Gastrocnemius medialis (tissue), 4 donors: ENCODE measurements at regions of chr2 and their contacts with region 1.

Region 1: DNA sequence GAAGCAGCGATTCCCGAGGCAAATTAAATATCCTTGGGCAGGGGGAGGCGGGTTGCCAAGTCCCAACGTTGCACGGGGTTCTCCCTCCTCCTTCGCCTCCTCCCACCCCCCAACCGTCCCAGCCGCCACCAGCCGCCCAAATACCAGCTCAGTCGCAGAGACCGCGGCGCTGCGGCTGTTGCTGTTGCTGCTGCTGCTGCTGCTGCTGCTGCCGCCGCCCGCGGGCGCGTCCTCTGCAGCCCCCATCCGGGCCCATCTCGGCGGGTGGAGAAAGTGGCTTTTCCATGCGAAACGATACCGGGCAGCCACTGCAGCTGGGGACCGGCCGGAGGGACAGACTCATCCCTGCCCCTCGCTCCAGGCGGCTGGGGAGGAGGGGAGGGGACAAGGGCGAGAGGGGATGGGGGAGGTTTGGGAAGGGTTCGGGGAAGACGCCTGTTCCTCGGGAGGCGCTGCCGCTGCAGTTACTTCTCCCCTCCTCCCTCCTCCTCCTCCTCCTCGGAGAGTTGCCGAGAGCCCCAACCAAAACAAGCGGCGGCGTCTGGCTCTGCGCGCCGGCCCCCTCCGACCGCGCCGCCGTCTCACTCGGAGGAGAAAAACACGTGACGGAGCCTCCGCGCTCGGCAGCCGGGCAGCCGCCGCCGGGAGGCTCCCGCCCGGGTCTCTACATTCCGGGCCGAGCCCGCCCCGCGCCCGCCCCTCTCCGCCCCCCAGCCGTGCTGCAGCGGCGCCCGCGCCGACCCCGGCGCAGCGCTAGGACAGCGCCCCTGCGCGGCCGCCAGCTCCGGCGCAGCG is at the start of gene IRS1:
- DNase-seq: peak; percentile 45 to 49
- ATAC-seq: peak; percentile 11 to 24
- H3K4me3 ChIP-seq: peak within 1 kb of the TSS; percentile 79 to 95 (median 88)
- H3K27ac ChIP-seq: peak within 1 kb of the TSS; percentile 95 to 99 (median 98)
- H3K4me1 ChIP-seq: peaks cover 38 to 44% of the 10 kb centered on the region in 2 donors
- H3K27me3 ChIP-seq: no peaks in the 10 kb centered on the region
- CTCF ChIP-seq: peak in 2 of 5 experiments; percentile 42 to 73
- POLR2A ChIP-seq: peak; percentile 21 to 40
- total RNA-seq, gene IRS1: 2.2 to 71.1 (median 6.3) TPM

Region 2: GRCh38 chr2:225668606-225669266 is 1130.6 kb before region 1 on chr2:
- in situ Hi-C with region 1: loop called in 3 of 4 experiments (anchors 5 to 10 kb)
- intact Hi-C with region 1: no loop called
- DNase-seq: no peak
- ATAC-seq: peak in 1 of 2 donors; percentile 47
- H3K4me3 ChIP-seq: no peak overlapping the region
- H3K27ac ChIP-seq: no peak overlapping the region
- H3K4me1 ChIP-seq: peaks cover 0 to 3% of the 10 kb centered on the region in 2 donors
- H3K27me3 ChIP-seq: no peaks in the 10 kb centered on the region
- CTCF ChIP-seq: peak in 3 of 5 experiments; percentile 39 to 53 (median 42)
- POLR2A ChIP-seq: no peak

Region 3: GRCh38 chr2:226087505-226088365 is 711.6 kb before region 1 on chr2:
- in situ Hi-C with region 1: no loop called
- intact Hi-C with region 1: loop called (anchors 2 kb)
- DNase-seq: peak in 1 of 2 donors; percentile 43
- ATAC-seq: peak in 1 of 2 donors; percentile 78
- H3K4me3 ChIP-seq: no peak overlapping the region
- H3K27ac ChIP-seq: peak overlapping the region; percentile 39 to 74 (median 72)
- H3K4me1 ChIP-seq: peaks cover 0 to 4% of the 10 kb centered on the region in 2 donors
- H3K27me3 ChIP-seq: no peaks in the 10 kb centered on the region
- CTCF ChIP-seq: no peak
- POLR2A ChIP-seq: no peak

Region 4: DNA sequence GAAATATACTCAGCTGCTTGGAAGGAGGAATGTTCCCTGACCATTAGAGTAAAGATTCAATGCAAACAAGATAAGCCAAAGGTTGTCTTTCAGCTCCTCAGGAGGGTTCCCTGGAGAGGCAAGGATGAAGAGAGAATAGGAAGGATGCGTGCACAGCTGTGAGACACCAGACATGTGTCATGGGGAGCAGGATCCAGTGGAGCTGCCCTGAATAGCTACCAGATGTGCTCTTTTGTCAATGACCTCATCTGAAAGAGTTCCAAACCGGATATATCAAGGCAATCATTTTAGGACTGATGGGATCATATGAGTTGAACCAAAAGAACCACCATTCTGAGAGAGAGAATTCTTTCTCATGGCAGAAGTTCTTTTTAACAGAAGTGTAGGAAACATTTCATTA is 490.4 kb before region 1 on chr2:
- in situ Hi-C with region 1: loop called in 2 of 4 experiments (anchors 10 to 25 kb)
- intact Hi-C with region 1: no loop called
- DNase-seq: peak in 1 of 2 donors; percentile 30
- ATAC-seq: peak; percentile 39 to 60
- H3K4me3 ChIP-seq: no peak overlapping the region
- H3K27ac ChIP-seq: no peak overlapping the region
- H3K4me1 ChIP-seq: peaks cover 0 to 8% of the 10 kb centered on the region in 2 donors
- H3K27me3 ChIP-seq: no peaks in the 10 kb centered on the region
- CTCF ChIP-seq: no peak
- POLR2A ChIP-seq: no peak

Region 5: GRCh38 chr2:226447338-226448295 is 351.8 kb before region 1 on chr2:
- in situ Hi-C with region 1: no loop called
- intact Hi-C with region 1: loop called (anchors 5 kb)
- DNase-seq: no peak
- ATAC-seq: peak in 1 of 2 donors; percentile 64
- H3K4me3 ChIP-seq: no peak overlapping the region
- H3K27ac ChIP-seq: peak overlapping the region; percentile 24 to 38 (median 32)
- H3K4me1 ChIP-seq: peaks cover 21 to 22% of the 10 kb centered on the region in 2 donors
- H3K27me3 ChIP-seq: no peaks in the 10 kb centered on the region
- CTCF ChIP-seq: no peak
- POLR2A ChIP-seq: no peak

Region 6: DNA sequence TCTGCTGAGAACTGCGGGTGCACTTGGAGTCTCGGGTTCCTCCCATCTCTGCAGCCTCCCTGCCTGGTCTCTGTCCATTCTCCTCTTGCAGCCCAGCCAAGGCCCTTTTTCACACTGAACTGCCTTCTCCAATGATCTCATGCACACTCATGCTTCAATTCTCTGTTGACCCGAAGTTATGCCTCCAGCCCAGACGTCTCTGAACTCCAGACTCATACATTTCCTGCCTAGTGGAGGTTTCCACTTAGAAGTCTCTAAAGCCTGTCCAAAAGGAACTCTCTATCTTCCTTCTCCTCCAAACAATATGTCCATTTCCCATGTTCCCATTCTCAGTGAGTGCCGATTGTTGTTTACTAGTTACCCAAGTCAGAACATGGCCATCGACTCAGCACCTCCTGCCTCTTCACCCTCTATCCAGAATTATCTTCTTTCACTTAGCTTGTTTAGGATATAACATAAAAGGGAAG is 154.9 kb before region 1 on chr2:
- in situ Hi-C with region 1: no loop called
- intact Hi-C with region 1: no loop called
- DNase-seq: no peak
- ATAC-seq: peak in 1 of 2 donors; percentile 53
- H3K4me3 ChIP-seq: no peak overlapping the region
- H3K27ac ChIP-seq: peak overlapping the region in 1 of 4 donors; percentile 22
- H3K4me1 ChIP-seq: peaks cover 8 to 9% of the 10 kb centered on the region in 2 donors
- H3K27me3 ChIP-seq: no peaks in the 10 kb centered on the region
- CTCF ChIP-seq: no peak
- POLR2A ChIP-seq: no peak

Region 7: DNA sequence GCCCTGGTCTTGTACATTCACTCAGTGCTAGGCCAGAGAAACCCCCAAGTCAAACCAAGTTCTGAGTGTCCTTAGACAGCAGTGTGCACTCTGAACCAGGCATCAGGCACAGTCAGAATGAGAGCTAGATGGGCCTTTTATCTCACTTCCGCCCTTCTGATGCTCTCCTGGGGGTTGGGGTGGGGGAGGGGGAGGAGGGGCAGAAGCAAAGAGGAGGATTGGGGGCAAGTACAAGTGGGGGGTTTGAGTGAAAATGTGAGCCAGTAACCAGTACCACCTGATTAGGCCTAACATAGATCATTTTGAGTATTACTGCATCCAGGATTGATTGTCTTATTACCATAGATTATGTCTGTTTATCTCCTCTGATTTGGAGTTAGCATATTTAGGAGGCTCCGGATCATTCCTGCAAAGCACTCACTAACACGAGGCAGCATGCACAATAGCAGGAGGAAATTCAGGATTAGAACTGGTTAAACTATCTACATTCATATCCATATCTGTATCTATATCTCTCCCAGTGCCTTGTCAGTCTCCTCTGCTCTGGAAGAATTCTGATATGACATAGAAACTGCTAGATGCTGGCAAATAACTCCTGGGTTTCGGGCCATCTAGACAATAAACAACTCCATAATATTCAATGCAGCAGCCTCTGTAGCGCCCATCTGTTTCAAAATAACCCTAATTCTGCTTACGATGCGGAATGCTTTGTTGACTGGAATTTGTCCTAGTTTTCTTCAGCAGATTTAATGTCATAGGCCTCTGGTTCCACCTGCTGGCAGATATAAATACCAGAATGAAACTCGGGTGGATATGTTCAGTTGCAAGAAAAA is 185.6 kb after region 1 on chr2:
- in situ Hi-C with region 1: loop called in 3 of 4 experiments (anchors 10 to 25 kb)
- intact Hi-C with region 1: loop called (anchors 5 kb)
- DNase-seq: peak; percentile 12 to 28
- ATAC-seq: peak; percentile 79 to 92
- H3K4me3 ChIP-seq: no peak overlapping the region
- H3K27ac ChIP-seq: peak overlapping the region; percentile 8 to 61 (median 30)
- H3K4me1 ChIP-seq: peaks cover 11 to 18% of the 10 kb centered on the region in 2 donors
- H3K27me3 ChIP-seq: no peaks in the 10 kb centered on the region
- CTCF ChIP-seq: peak; percentile 52 to 73 (median 68)
- POLR2A ChIP-seq: no peak